HCT116 (cell line): ENCODE measurements at regions of chr1 and their contacts with region 1.

Region 1: DNA sequence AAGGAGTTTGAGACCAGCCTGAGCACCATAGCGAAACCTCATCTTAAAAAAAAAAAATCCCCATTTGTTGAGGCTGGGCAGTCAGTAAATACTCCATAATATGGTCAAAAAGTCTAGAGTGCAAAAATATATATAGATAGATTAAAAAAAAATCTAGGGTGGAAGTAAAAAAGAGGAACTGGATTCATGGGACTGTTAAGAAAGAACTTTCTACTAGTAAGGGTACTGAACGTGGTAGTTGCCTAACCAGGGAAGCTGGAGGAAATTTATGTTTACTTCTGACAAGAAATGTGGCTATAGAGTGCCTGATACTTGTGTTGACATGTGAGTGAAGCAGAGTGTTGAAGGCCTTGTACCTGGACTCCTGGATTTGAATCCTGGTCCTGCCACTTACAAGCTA is 265.9 kb upstream of the FAM78B start:
- DNase-seq: no peak
- ATAC-seq: no peak
- H3K4me3 ChIP-seq: no peak overlapping the region
- H3K27ac ChIP-seq: no peak overlapping the region
- H3K4me1 ChIP-seq: no peaks in the 10 kb centered on the region
- H3K27me3 ChIP-seq: no peaks in the 10 kb centered on the region
- CTCF ChIP-seq: no peak
- POLR2A ChIP-seq: no peak
- RAD21 ChIP-seq: no peak

Region 2: GRCh38 chr1:165717918-165718515 is 714.6 kb before region 1 on chr1:
- CTCF ChIA-PET with region 1: no interaction called
- POLR2A ChIA-PET with region 1: no interaction called
- RAD21 ChIA-PET with region 1: no interaction called
- intact Hi-C with region 1: loop called (anchors 5 kb)
- DNase-seq: peak; percentile 48
- ATAC-seq: peak; percentile 90
- H3K4me3 ChIP-seq: no peak overlapping the region
- H3K27ac ChIP-seq: no peak overlapping the region
- H3K4me1 ChIP-seq: no peaks in the 10 kb centered on the region
- H3K27me3 ChIP-seq: no peaks in the 10 kb centered on the region
- CTCF ChIP-seq: peak; percentile 80 to 89 (median 82)
- POLR2A ChIP-seq: no peak
- RAD21 ChIP-seq: peak; percentile 93

Region 3: DNA sequence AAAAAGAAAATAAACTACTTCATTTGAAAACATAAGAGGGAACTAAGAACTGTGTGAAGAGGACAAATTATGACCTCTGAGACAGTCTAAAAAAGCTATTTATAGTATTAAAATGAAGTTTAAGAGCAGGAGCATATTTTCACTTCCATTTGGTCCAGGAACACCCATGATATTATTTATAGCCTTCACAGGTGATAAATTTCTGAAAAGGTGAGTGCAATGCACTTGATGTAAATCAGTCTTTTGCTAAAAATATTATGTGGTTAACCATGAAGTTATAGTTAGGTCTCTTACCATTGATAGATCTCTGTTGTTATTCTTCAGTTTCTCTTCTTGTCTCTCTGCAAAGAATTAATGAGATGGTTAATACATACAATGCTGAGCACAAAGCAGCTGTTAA is 678.7 kb before region 1 on chr1:
- CTCF ChIA-PET with region 1: no interaction called
- POLR2A ChIA-PET with region 1: no interaction called
- RAD21 ChIA-PET with region 1: no interaction called
- intact Hi-C with region 1: no loop called
- DNase-seq: no peak
- ATAC-seq: no peak
- H3K4me3 ChIP-seq: no peak overlapping the region
- H3K27ac ChIP-seq: no peak overlapping the region
- H3K4me1 ChIP-seq: no peaks in the 10 kb centered on the region
- H3K27me3 ChIP-seq: no peaks in the 10 kb centered on the region
- CTCF ChIP-seq: no peak
- POLR2A ChIP-seq: no peak
- RAD21 ChIP-seq: no peak

Region 4: DNA sequence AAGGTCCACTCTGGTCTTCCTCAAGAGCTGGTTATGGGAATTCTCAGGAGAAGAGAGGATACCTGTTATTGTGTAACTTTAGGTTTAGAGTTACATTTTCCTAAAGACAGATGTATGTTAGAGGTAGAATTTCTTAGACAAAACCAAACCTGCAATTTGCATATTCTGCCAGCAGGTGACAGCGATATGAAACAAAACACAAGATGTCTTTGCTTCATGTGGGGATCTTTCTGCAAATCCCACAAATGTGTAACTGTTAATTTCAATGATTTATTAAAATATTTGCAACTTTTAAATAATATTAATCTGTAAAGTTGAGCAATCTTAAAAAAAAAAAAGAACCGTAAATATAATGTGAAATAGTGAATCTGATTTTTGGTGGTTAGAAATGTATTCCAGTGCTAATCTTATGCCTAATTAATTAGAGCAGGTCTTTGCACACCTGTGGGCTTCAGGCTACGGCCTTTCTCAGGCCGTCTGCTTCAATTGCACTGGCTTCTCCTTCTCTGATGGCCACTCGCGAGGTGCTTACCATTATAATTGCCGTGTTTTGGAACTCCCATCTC is 299.3 kb before region 1 on chr1:
- CTCF ChIA-PET with region 1: no interaction called
- POLR2A ChIA-PET with region 1: no interaction called
- RAD21 ChIA-PET with region 1: no interaction called
- intact Hi-C with region 1: loop called (anchors 1 kb)
- DNase-seq: peak; percentile 10
- ATAC-seq: no peak
- H3K4me3 ChIP-seq: no peak overlapping the region
- H3K27ac ChIP-seq: no peak overlapping the region
- H3K4me1 ChIP-seq: no peaks in the 10 kb centered on the region
- H3K27me3 ChIP-seq: peaks cover 24% of the 10 kb centered on the region
- CTCF ChIP-seq: peak; percentile 35 to 68 (median 62); a peak in 5 of 6 replicates
- POLR2A ChIP-seq: no peak
- RAD21 ChIP-seq: peak; percentile 58

Region 5: GRCh38 chr1:166322470-166322869 is 110.2 kb before region 1 on chr1:
- CTCF ChIA-PET with region 1: no interaction called
- POLR2A ChIA-PET with region 1: no interaction called
- RAD21 ChIA-PET with region 1: no interaction called
- intact Hi-C with region 1: no loop called
- DNase-seq: no peak
- ATAC-seq: no peak
- H3K4me3 ChIP-seq: no peak overlapping the region
- H3K27ac ChIP-seq: no peak overlapping the region
- H3K4me1 ChIP-seq: no peaks in the 10 kb centered on the region
- H3K27me3 ChIP-seq: peaks cover 42% of the 10 kb centered on the region
- CTCF ChIP-seq: no peak
- POLR2A ChIP-seq: no peak
- RAD21 ChIP-seq: no peak

Region 6: GRCh38 chr1:166588741-166589140 is 156.1 kb after region 1 on chr1:
- CTCF ChIA-PET with region 1: no interaction called
- POLR2A ChIA-PET with region 1: no interaction called
- RAD21 ChIA-PET with region 1: no interaction called
- intact Hi-C with region 1: no loop called
- DNase-seq: no peak
- ATAC-seq: no peak
- H3K4me3 ChIP-seq: no peak overlapping the region
- H3K27ac ChIP-seq: no peak overlapping the region
- H3K4me1 ChIP-seq: no peaks in the 10 kb centered on the region
- H3K27me3 ChIP-seq: peaks cover 5% of the 10 kb centered on the region; the same call in 1 of the 2 replicates
- CTCF ChIP-seq: no peak
- POLR2A ChIP-seq: no peak
- RAD21 ChIP-seq: no peak